Prostate gland (tissue), 2 donors: ENCODE measurements at regions of chr14 and their contacts with region 1.

Region 1: DNA sequence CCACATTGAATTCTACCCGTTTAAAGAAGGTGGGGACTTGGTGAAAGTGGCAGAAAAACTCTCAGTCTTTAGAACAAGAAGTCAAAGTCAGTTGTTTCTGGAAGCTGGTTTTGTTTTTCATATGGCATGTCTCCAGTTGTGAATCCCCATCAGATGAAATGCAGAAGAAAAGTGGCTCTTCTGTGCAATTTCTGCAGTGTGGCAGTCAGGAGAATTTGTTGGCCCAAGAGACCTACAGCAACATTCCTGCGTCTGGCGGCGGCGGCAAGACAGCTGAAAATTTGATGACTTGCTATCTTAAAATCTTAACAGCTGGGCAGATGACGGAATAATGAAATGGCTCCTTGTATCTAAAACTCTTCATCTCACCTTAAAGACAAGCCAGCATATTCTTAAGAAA is 201.5 kb downstream of the FOXN3 start:
- DNase-seq: no peak
- H3K4me3 ChIP-seq: no peak overlapping the region
- H3K27ac ChIP-seq: peak overlapping the region in 1 of 2 donors; percentile 1
- H3K4me1 ChIP-seq: peaks cover 14% of the 10 kb centered on the region
- H3K27me3 ChIP-seq: no peaks in the 10 kb centered on the region
- CTCF ChIP-seq: no peak
- POLR2A ChIP-seq: no peak

Region 2: DNA sequence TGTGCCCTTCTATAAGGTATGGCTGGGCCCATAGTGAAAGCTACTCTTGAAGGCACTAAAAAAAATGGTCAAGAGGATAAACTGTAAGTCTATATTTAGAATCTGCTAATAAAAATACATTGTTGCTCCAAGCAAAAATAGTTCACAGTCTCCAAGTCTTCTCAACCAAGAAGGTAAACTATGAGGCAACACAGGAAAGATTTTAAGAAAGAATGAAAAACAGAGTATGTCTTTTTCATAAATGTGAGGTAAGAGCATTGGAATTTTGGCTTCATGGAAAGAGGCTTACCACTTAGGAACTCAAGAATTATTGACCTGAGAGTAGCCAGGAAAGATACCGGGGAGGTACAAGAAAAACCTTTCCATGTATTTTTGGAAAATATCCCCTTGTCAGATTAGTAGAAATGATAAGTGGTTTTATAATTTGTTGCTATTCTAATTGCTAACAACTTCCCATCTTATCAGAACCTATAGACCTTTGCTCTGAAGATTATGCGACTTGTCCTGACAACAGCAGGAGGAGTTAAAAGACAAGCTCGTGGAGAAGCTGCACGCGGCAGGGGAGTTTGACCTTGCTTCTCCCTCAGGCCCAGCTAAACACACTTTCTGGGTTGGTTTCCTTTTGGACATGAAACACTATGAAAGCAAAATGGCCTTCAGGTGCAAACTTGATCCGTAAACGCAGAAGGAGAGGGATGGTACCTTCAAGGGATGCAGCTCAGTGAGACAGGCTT is 36.6 kb before region 1 on chr14:
- intact Hi-C with region 1: loop called (anchors 5 kb)
- DNase-seq: no peak
- H3K4me3 ChIP-seq: no peak overlapping the region
- H3K27ac ChIP-seq: no peak overlapping the region
- H3K4me1 ChIP-seq: no peaks in the 10 kb centered on the region
- H3K27me3 ChIP-seq: no peaks in the 10 kb centered on the region
- CTCF ChIP-seq: no peak
- POLR2A ChIP-seq: no peak